Activated CD4-positive, alpha-beta memory T cell treated with anti-CD3 and anti-CD28 coated beads for 36 hours (primary cell): ENCODE measurements at regions of chr14 and their contacts with region 1.

Region 1: GRCh38 chr14:53190938-53191337 is 37.8 kb upstream of the DDHD1 start:
- DNase-seq: peak; percentile 88
- H3K4me3 Mint-ChIP-seq: peak overlapping the region; percentile 17
- H3K27ac Mint-ChIP-seq: peak overlapping the region; percentile 81
- H3K4me1 Mint-ChIP-seq: peaks cover 42% of the 10 kb centered on the region
- H3K27me3 Mint-ChIP-seq: peaks cover 3% of the 10 kb centered on the region

Region 2: DNA sequence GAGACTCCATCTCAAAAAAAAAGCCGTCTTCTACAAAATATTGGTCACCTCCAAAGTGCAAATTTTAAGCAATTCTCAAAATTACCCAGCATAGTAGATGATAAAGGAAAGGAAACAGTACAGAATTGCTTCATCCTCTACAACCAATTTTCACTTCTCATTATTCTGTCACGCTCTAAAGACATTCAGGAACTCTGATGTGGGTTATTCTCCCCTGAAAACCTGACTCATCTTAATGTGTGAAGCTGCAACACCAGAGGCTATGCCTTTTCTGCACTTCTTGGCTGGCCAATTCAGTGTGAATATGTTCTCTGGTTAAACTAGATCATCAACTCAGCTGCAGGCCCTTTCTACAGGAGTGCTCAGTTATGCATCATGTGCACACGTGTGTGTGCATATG is 865.8 kb before region 1 on chr14:
- CTCF ChIA-PET with region 1: interaction called, 3 read pairs
- POLR2A ChIA-PET with region 1: no interaction called
- intact Hi-C with region 1: loop called (anchors 2 kb)
- DNase-seq: peak; percentile 53
- H3K4me3 Mint-ChIP-seq: no peak overlapping the region
- H3K27ac Mint-ChIP-seq: peak overlapping the region; percentile 50
- H3K4me1 Mint-ChIP-seq: peaks cover 72% of the 10 kb centered on the region
- H3K27me3 Mint-ChIP-seq: no peaks in the 10 kb centered on the region

Region 3: GRCh38 chr14:52741865-52742264 is 449.1 kb before region 1 on chr14:
- CTCF ChIA-PET with region 1: no interaction called
- POLR2A ChIA-PET with region 1: no interaction called
- intact Hi-C with region 1: loop called (anchors 5 kb)
- DNase-seq: no peak
- H3K4me3 Mint-ChIP-seq: peak overlapping the region; percentile 73
- H3K27ac Mint-ChIP-seq: peak overlapping the region; percentile 98
- H3K4me1 Mint-ChIP-seq: peaks cover 68% of the 10 kb centered on the region
- H3K27me3 Mint-ChIP-seq: no peaks in the 10 kb centered on the region

Region 4: DNA sequence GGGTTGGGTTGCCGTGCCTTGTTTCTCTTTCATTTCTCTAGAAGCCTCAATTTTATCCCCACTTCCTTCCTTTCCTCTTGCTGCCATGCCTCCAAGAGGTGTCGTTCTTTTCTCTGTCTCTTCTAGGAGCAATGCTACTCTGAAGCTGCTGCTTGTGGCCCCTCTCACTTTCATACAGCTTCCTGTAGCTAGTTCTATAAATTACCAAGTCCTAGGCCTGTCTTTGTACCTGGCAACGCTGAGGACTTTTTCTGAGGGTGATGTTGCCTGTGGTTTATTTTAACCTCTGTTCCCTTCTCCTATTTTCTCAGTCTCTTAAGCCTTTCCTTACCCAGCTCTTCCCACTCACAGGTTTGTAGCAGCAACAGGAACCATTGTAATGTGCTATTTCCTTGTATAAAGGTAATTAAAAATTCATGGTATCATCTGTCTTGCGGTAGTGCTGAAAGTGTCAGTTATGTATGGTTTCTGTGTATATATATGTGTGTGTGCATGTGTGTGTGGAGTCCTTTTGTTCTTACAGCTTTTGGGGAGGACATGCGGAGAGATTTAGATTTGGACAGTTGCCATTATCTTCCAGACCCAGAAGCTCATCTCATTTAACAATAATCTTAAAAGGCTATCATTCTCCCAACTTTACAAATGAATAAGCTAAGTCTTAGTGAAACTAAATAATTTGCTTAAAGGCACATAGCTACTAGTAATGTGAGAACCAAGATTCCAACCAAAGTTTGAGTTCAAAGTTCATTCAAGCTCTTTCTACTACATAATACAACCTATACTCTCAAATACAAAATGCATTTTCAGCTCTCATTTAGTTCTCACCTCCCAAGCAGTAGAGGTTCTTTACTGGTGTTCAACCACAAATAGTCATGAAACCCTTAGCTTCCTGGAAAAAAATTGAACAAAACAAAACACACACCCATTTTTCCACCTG is 81.6 kb before region 1 on chr14:
- CTCF ChIA-PET with region 1: interaction called, 8 read pairs
- POLR2A ChIA-PET with region 1: interaction called, 13 read pairs
- intact Hi-C with region 1: loop called (anchors 1 kb)
- DNase-seq: peak; percentile 76
- H3K4me3 Mint-ChIP-seq: no peak overlapping the region
- H3K27ac Mint-ChIP-seq: no peak overlapping the region
- H3K4me1 Mint-ChIP-seq: peaks cover 23% of the 10 kb centered on the region
- H3K27me3 Mint-ChIP-seq: no peaks in the 10 kb centered on the region

Region 5: GRCh38 chr14:53161758-53162435 is 29.0 kb before region 1 on chr14:
- CTCF ChIA-PET with region 1: no interaction called
- POLR2A ChIA-PET with region 1: no interaction called
- intact Hi-C with region 1: no loop called
- DNase-seq: no peak
- H3K4me3 Mint-ChIP-seq: no peak overlapping the region
- H3K27ac Mint-ChIP-seq: no peak overlapping the region
- H3K4me1 Mint-ChIP-seq: peaks cover 7% of the 10 kb centered on the region
- H3K27me3 Mint-ChIP-seq: no peaks in the 10 kb centered on the region

Region 6: DNA sequence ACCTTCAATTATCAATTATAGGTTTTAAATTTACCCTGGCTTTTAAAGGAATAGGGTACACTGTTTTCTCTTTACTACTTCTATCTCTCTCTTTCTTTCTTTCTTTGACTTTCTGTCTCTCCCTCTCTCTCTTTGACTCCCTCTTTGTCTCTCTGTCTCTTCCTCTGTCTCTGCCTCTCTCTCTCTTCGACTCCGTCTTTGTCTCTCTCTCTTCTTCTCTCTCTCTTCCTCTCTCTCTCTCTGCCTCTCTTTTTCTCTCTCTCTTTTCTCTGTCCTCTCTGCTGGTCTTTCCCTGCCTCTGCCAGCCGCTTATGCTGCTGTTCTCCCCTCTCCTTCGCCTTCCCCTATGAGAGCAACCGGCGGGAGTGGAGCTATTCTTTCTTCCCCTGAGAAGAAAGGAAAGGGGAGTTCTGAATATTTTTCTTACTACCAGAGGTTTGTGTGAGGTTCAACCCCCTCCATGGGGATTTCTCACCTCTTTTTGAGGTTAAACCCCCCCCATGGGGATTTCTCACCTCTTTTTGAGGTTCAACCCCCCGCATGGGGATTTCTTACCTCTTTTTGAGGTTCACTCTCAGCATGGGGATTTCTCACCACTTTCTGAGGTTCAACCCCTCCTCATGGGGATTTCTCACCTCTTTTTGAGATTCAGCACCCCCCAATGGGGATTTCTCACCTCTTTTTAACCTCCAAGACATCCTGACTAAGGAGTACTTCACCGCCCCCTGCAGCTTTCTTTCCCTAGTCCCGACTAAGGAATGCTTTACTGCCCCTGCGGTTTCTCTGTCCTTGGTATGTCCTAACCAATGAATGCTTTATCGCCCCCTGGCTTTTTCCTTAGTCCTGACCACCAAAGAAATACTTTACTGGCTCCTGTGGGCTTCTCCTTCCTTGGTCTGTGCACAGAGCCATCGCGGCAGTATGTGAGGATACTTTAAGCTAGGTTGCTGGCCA is 10.4 kb before region 1 on chr14:
- CTCF ChIA-PET with region 1: interaction called, 4 read pairs
- POLR2A ChIA-PET with region 1: interaction called, 8 read pairs
- intact Hi-C with region 1: loop called (anchors 1 kb)
- DNase-seq: peak; percentile 75
- H3K4me3 Mint-ChIP-seq: peak overlapping the region; percentile 3
- H3K27ac Mint-ChIP-seq: peak overlapping the region; percentile 67
- H3K4me1 Mint-ChIP-seq: peaks cover 41% of the 10 kb centered on the region
- H3K27me3 Mint-ChIP-seq: no peaks in the 10 kb centered on the region

Region 7: GRCh38 chr14:53273671-53274072 is 82.7 kb after region 1 on chr14:
- CTCF ChIA-PET with region 1: no interaction called
- POLR2A ChIA-PET with region 1: no interaction called
- intact Hi-C with region 1: no loop called
- DNase-seq: no peak
- H3K4me3 Mint-ChIP-seq: no peak overlapping the region
- H3K27ac Mint-ChIP-seq: no peak overlapping the region
- H3K4me1 Mint-ChIP-seq: peaks cover 2% of the 10 kb centered on the region
- H3K27me3 Mint-ChIP-seq: no peaks in the 10 kb centered on the region